A673 (cell line): ENCODE measurements at regions of chr13 and their contacts with region 1.

Region 1: GRCh38 chr13:37869756-37870488 is at the start of gene TRPC4:
- DNase-seq: peak; percentile 96
- H3K4me3 ChIP-seq: peak within 1 kb of the TSS; percentile 57
- H3K27ac ChIP-seq: peak within 1 kb of the TSS; percentile 42
- H3K4me1 ChIP-seq: peaks cover 25% of the 10 kb centered on the region
- H3K27me3 ChIP-seq: peaks cover 19% of the 10 kb centered on the region
- CTCF ChIP-seq: peak; percentile 92
- total RNA-seq, gene TRPC4: 25.3 and 27.0 TPM in 2 replicates

Region 2: GRCh38 chr13:37348916-37349643 is 520.8 kb before region 1 on chr13:
- CTCF ChIA-PET with region 1: no interaction called
- POLR2A ChIA-PET with region 1: no interaction called
- intact Hi-C with region 1: no loop called
- DNase-seq: no peak
- H3K4me3 ChIP-seq: no peak overlapping the region
- H3K27ac ChIP-seq: no peak overlapping the region
- H3K4me1 ChIP-seq: no peaks in the 10 kb centered on the region
- H3K27me3 ChIP-seq: no peaks in the 10 kb centered on the region
- CTCF ChIP-seq: no peak

Region 3: DNA sequence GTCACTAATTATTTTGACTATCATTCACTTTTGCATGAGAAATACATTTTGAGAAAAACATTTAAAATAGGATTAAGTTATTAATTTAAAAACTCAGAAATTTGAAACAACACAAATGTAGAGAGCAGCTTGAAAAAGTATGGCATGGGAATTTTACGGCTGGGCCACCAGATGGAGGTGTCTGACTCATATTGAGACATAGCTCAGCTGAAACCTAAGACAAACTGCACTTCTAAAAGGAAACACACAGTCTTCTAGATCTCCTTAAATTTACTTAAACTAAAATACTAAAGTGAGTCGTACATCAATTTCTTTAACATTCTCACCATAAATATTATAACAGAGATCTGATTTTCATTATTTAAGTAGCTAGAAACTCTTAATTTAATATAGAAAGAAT is 229.4 kb before region 1 on chr13:
- CTCF ChIA-PET with region 1: interaction called, 17 read pairs
- POLR2A ChIA-PET with region 1: interaction called, 3 read pairs
- intact Hi-C with region 1: loop called (anchors 2 kb)
- DNase-seq: peak; percentile 80
- H3K4me3 ChIP-seq: no peak overlapping the region
- H3K27ac ChIP-seq: no peak overlapping the region
- H3K4me1 ChIP-seq: peaks cover 16% of the 10 kb centered on the region
- H3K27me3 ChIP-seq: no peaks in the 10 kb centered on the region
- CTCF ChIP-seq: peak; percentile 83

Region 4: GRCh38 chr13:38045307-38046048 is 175.6 kb after region 1 on chr13:
- CTCF ChIA-PET with region 1: interaction called, 4 read pairs
- POLR2A ChIA-PET with region 1: no interaction called
- intact Hi-C with region 1: loop called (anchors 1 kb)
- DNase-seq: peak; percentile 88
- H3K4me3 ChIP-seq: no peak overlapping the region
- H3K27ac ChIP-seq: peak overlapping the region; percentile 28
- H3K4me1 ChIP-seq: peaks cover 9% of the 10 kb centered on the region
- H3K27me3 ChIP-seq: no peaks in the 10 kb centered on the region
- CTCF ChIP-seq: peak; percentile 85

Region 5: GRCh38 chr13:38409771-38410170 is 539.8 kb after region 1 on chr13:
- CTCF ChIA-PET with region 1: no interaction called
- POLR2A ChIA-PET with region 1: no interaction called
- intact Hi-C with region 1: no loop called
- DNase-seq: no peak
- H3K4me3 ChIP-seq: no peak overlapping the region
- H3K27ac ChIP-seq: no peak overlapping the region
- H3K4me1 ChIP-seq: no peaks in the 10 kb centered on the region
- H3K27me3 ChIP-seq: no peaks in the 10 kb centered on the region
- CTCF ChIP-seq: no peak

Region 6: GRCh38 chr13:38530492-38530891 is 660.6 kb after region 1 on chr13:
- CTCF ChIA-PET with region 1: no interaction called
- POLR2A ChIA-PET with region 1: no interaction called
- intact Hi-C with region 1: loop called (anchors 5 kb)
- DNase-seq: peak; percentile 57
- H3K4me3 ChIP-seq: no peak overlapping the region
- H3K27ac ChIP-seq: no peak overlapping the region
- H3K4me1 ChIP-seq: peaks cover 14% of the 10 kb centered on the region
- H3K27me3 ChIP-seq: no peaks in the 10 kb centered on the region
- CTCF ChIP-seq: peak; percentile 68

Region 7: DNA sequence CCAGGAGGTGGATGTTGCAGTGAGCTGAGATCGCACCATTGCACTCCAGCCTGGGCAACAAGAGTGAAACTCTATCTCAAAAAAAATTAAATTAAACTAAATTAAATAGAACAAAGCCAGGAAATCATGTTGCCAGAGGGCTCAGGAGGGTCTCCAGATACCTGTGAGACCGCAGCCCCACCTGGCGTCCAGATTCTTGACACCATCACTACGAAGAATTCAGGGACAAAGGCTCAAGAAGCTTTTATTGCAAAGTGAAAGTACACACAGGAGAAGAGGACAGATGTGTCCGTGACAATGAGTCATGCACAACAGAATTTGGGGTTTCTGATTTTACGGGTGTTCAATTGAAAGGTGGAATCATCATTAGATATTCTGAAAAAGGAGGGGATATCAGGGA is 1044.1 kb after region 1 on chr13:
- CTCF ChIA-PET with region 1: no interaction called
- POLR2A ChIA-PET with region 1: no interaction called
- intact Hi-C with region 1: loop called (anchors 5 kb)
- DNase-seq: no peak
- H3K4me3 ChIP-seq: no peak overlapping the region
- H3K27ac ChIP-seq: no peak overlapping the region
- H3K4me1 ChIP-seq: no peaks in the 10 kb centered on the region
- H3K27me3 ChIP-seq: no peaks in the 10 kb centered on the region
- CTCF ChIP-seq: no peak